ENCODE measurements at regions of chr2 and their contacts with region 1.

Region 1: DNA sequence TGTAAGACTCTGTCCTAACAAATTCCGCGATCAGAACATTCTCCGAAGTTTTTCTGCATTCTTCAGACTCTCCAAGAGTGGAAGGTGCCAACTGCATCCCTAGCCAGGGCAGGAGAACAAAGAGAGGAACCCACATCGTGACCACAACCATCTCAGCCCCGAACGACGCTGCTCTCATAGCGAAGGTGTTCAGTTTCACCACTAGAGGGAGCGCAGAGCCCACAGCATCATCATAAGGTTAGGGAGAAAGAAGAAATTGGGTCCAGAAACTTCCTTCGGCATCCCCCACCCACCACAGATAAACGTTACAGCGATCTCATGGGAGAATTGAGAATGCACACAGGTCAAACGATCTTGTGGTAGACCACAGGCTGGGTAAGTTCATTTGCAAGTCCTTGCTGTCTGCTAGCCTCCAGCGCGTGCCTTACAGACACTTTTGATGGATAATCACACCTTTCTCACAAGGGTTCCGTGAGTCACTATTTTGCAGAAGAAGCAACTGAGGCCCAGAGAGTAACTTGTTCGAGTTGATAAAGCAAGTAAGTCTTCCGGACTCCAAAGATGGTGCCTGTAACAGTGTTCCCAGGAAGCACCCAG is 53.7 kb upstream of the ARL4C start:
- DNase-seq: peak; percentile 74 to 85
- H3K4me3 ChIP-seq: no peak overlapping the region
- H3K27ac ChIP-seq: no peak overlapping the region
- H3K4me1 ChIP-seq: peaks cover 11% of the 10 kb centered on the region
- H3K27me3 ChIP-seq: no peaks in the 10 kb centered on the region
- CTCF ChIP-seq: peak; percentile 99

Region 2: GRCh38 chr2:233854241-233854981 is 696.2 kb before region 1 on chr2 and contains the start of gene HJURP:
- CTCF ChIA-PET with region 1: interaction called, 4 read pairs
- POLR2A ChIA-PET with region 1: no interaction called
- intact Hi-C with region 1: loop called (anchors 1 kb)
- DNase-seq: peak; percentile 95 to 98
- H3K4me3 ChIP-seq: peak within 1 kb of the TSS; percentile 100
- H3K27ac ChIP-seq: peak within 1 kb of the TSS; percentile 21; the same call in 1 of the 2 replicates
- H3K4me1 ChIP-seq: peaks cover 32% of the 10 kb centered on the region
- H3K27me3 ChIP-seq: no peaks in the 10 kb centered on the region
- CTCF ChIP-seq: no peak
- total RNA-seq, gene HJURP: 109 TPM in 2 replicates

Region 3: DNA sequence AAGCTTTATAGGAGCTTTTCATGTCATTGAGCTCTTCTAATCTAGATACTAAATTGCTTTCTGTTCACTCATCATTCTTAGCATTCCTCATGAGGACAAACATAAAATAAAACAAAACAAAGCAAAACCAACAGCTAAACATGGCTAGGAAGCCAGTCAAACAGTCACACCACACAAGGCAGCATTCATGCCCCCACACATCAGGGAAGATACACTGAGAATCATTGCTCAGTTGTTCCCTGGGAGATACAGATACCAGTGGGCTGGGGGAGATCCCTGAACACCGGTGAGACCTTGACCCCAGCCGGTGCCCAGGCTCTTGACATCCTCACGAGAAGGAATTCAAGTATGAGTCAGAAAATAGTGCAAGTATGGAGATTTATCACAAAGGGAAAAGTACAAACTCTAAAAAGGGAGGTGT is 124.2 kb after region 1 on chr2:
- CTCF ChIA-PET with region 1: interaction called, 3 read pairs
- POLR2A ChIA-PET with region 1: no interaction called
- intact Hi-C with region 1: loop called (anchors 5 kb)
- DNase-seq: peak; percentile 52 to 75
- H3K4me3 ChIP-seq: no peak overlapping the region
- H3K27ac ChIP-seq: peak overlapping the region; percentile 54
- H3K4me1 ChIP-seq: peaks cover 72% of the 10 kb centered on the region
- H3K27me3 ChIP-seq: no peaks in the 10 kb centered on the region
- CTCF ChIP-seq: no peak

Region 4: DNA sequence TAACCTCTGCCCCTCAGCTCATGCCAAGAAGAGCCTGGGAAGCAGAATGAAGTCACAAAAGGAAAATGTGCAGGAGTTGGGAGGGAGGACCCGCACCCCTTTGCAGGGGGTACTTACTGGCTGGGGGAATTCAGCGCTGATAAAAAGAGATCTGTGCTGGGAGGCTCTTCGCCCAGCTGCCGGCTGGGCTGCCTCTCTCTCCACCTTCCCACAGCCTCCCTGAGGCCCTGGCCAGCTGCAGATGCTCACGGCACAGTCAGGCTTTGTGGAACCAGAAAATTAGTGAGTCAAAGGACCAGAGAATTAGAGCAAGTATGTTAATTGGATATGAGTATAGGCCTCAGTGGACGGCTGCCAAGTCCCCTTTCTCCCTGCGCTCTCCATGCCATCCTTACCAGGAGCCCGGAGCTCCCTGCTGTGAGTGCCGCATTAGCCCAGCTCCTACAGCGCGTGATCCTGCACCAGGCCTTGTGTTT is 219.5 kb after region 1 on chr2:
- CTCF ChIA-PET with region 1: no interaction called
- POLR2A ChIA-PET with region 1: no interaction called
- intact Hi-C with region 1: loop called (anchors 10 kb)
- DNase-seq: no peak
- H3K4me3 ChIP-seq: no peak overlapping the region
- H3K27ac ChIP-seq: no peak overlapping the region
- H3K4me1 ChIP-seq: peaks cover 19% of the 10 kb centered on the region
- H3K27me3 ChIP-seq: no peaks in the 10 kb centered on the region
- CTCF ChIP-seq: no peak

Region 5: DNA sequence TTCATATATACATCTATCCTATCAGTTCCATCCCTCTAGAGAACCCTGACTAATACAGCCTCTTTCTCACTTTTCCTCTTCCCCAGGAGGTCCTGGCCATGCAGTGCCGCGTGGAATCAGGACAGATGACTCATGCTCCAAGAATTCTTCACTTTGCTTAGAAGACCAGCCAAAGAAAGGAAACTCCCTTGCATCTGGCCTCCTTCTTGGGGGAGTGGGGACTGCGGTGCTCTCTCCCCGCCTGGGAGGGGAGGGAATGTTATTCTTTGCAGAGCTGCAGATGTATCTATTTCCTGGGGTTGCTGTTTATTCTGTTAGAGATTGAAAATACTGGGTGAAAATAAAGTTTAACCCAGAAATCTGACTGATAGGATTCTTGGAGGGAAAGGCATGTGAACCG is 289.7 kb after region 1 on chr2:
- CTCF ChIA-PET with region 1: no interaction called
- POLR2A ChIA-PET with region 1: no interaction called
- intact Hi-C with region 1: loop called (anchors 2 kb)
- DNase-seq: peak; percentile 86 to 92
- H3K4me3 ChIP-seq: no peak overlapping the region
- H3K27ac ChIP-seq: peak overlapping the region; percentile 63
- H3K4me1 ChIP-seq: peaks cover 38% of the 10 kb centered on the region
- H3K27me3 ChIP-seq: no peaks in the 10 kb centered on the region
- CTCF ChIP-seq: no peak

Region 6: DNA sequence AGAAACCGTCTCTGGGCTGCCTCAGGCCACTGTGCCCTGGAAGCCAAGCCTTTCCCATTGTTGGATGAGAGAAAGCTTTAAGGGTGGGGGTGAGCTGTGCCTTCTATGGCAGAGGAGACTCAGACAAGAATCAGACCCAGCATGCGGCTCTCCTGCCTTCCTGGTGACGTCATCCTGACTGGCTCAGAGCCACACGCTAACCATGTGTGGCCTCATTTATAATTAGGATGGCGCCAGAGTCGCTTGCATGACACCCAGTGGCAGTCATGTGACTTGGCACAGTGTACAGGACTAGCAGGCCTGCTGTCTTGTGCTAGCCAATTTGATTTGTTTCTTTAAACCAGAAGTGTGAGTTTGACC is 500.4 kb after region 1 on chr2:
- CTCF ChIA-PET with region 1: no interaction called
- POLR2A ChIA-PET with region 1: no interaction called
- intact Hi-C with region 1: loop called (anchors 1 kb)
- DNase-seq: peak; percentile 89 to 97
- H3K4me3 ChIP-seq: no peak overlapping the region
- H3K27ac ChIP-seq: peak overlapping the region; percentile 74
- H3K4me1 ChIP-seq: peaks cover 57% of the 10 kb centered on the region
- H3K27me3 ChIP-seq: no peaks in the 10 kb centered on the region
- CTCF ChIP-seq: no peak; the same call in 1 of the 2 replicates

Region 7: GRCh38 chr2:235116885-235117492 is 566.4 kb after region 1 on chr2:
- CTCF ChIA-PET with region 1: interaction called, 12 read pairs
- POLR2A ChIA-PET with region 1: no interaction called
- intact Hi-C with region 1: loop called (anchors 1 kb)
- DNase-seq: peak in 1 of 2 experiments; percentile 55
- H3K4me3 ChIP-seq: no peak overlapping the region
- H3K27ac ChIP-seq: no peak overlapping the region
- H3K4me1 ChIP-seq: no peaks in the 10 kb centered on the region; the same call in 1 of the 2 replicates
- H3K27me3 ChIP-seq: no peaks in the 10 kb centered on the region
- CTCF ChIP-seq: peak; percentile 92

Measured in PC-9 (cell line).